PC-9 (cell line): ENCODE measurements at regions of chr1 and their contacts with region 1.

Region 1: GRCh38 chr1:81717230-81717629 is 83.5 kb upstream of the ADGRL2 start:
- DNase-seq: peak in 1 of 2 experiments; percentile 68
- H3K4me3 ChIP-seq: no peak overlapping the region
- H3K27ac ChIP-seq: peak overlapping the region; percentile 20; the same call in 1 of the 2 replicates
- H3K4me1 ChIP-seq: peaks cover 10% of the 10 kb centered on the region
- H3K27me3 ChIP-seq: no peaks in the 10 kb centered on the region
- CTCF ChIP-seq: no peak

Region 2: GRCh38 chr1:81760477-81761097 is 43.4 kb after region 1 on chr1:
- CTCF ChIA-PET with region 1: interaction called, 19 read pairs
- POLR2A ChIA-PET with region 1: no interaction called
- intact Hi-C with region 1: no loop called
- DNase-seq: no peak
- H3K4me3 ChIP-seq: no peak overlapping the region
- H3K27ac ChIP-seq: no peak overlapping the region
- H3K4me1 ChIP-seq: no peaks in the 10 kb centered on the region
- H3K27me3 ChIP-seq: no peaks in the 10 kb centered on the region
- CTCF ChIP-seq: peak; percentile 65

Region 3: DNA sequence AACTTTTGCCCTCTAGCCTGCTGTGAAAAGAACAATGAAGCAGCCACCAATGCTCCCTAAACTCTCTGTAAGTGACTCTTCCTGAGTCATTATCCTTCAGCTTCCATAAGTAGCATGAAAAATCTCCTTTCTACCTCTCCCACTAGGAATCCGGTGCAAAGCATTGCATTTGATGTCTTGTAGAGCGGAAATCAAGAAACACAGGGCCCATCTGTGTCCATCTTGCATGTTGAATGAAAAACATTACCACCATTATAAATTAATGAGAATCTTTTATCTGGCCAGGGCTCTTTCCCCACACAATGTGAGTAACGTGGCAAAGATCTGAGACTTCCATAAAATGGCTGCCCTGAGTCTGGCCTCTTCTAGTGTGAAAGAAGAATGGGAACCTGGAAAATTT is 407.9 kb after region 1 on chr1:
- CTCF ChIA-PET with region 1: no interaction called
- POLR2A ChIA-PET with region 1: no interaction called
- intact Hi-C with region 1: no loop called
- DNase-seq: no peak
- H3K4me3 ChIP-seq: no peak overlapping the region
- H3K27ac ChIP-seq: no peak overlapping the region
- H3K4me1 ChIP-seq: no peaks in the 10 kb centered on the region
- H3K27me3 ChIP-seq: no peaks in the 10 kb centered on the region
- CTCF ChIP-seq: no peak